ENCODE measurements at regions of chr1 and their contacts with region 1.

Region 1: DNA sequence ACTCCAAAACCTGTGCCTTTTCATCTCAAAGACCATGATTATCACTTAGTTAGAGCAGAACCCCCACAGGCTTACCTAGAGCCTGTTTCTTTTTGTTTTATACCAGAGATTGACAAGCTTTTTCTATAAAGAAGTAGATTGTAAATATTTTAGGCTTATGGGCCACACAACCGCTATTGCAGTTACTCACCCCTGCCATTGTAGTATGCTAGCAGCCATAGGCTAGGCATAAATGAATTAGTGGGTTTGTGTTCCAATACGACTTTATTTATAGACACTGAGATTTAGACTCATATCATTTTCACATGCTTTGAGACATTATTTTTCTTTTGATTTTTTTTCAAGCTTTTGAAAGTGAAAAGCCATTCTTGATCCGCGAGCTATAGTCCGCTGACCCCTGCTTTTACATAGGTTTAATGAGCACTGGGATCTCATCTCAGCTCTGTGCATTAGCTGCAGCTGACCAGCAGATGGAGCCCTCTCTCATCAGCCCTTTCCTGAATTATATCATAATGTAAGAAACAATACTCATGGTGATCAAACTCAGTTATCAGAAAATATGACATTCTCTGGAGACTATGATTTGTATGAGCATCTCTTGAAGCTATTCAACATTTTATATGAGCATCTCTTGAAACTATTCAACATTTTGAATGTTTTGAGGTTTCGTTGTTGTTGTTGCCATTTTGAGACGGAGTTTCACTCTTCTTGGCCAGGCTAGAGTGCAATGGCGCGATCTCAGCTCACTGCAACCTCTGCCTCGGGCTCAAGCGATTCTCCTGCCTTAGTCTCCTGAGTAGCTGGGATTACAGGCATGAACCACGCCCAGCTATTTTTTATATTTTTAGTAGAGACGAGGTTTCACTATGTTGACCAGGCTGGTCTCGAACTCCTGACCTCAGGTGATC is 111.9 kb upstream of the L1TD1 start:
- DNase-seq: peak; percentile 75
- H3K4me3 Mint-ChIP-seq: no peak overlapping the region
- H3K27ac Mint-ChIP-seq: no peak overlapping the region
- H3K4me1 Mint-ChIP-seq: no peaks in the 10 kb centered on the region
- H3K27me3 Mint-ChIP-seq: no peaks in the 10 kb centered on the region

Region 2: GRCh38 chr1:62131093-62131725 is 48.5 kb after region 1 on chr1:
- intact Hi-C with region 1: loop called (anchors 1 kb)
- DNase-seq: peak; percentile 79
- H3K4me3 Mint-ChIP-seq: no peak overlapping the region
- H3K27ac Mint-ChIP-seq: no peak overlapping the region
- H3K4me1 Mint-ChIP-seq: no peaks in the 10 kb centered on the region
- H3K27me3 Mint-ChIP-seq: no peaks in the 10 kb centered on the region

Region 3: DNA sequence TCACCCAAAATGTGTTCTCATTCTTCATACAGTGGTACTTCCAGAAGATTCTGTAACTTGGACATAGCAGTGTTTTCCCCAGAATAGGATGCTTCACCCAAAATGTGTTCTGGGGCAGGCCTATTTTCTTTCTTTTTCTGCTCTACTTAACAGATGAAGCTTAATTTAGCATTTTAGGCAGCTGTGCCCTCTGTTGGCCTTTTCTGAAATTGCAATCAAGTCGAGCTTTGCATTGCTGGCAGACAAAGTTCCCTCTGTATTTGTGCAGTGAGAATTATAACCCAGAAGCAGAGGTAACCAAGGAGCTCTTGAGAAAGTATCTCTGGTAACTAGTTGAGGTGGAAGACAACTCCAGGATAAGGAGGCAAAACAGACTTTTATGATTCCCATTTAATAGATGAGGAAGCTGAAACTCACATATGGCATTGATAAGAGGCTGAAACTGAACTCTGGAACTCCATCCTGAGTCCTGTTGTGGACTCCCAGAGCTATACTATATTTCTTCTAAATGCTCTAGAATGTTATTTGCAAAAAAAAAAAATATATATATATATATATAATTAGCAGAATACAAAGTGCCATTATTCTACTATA is 61.6 kb after region 1 on chr1:
- intact Hi-C with region 1: loop called (anchors 1 kb)
- DNase-seq: peak; percentile 80
- H3K4me3 Mint-ChIP-seq: no peak overlapping the region
- H3K27ac Mint-ChIP-seq: no peak overlapping the region
- H3K4me1 Mint-ChIP-seq: no peaks in the 10 kb centered on the region
- H3K27me3 Mint-ChIP-seq: no peaks in the 10 kb centered on the region

Region 4: DNA sequence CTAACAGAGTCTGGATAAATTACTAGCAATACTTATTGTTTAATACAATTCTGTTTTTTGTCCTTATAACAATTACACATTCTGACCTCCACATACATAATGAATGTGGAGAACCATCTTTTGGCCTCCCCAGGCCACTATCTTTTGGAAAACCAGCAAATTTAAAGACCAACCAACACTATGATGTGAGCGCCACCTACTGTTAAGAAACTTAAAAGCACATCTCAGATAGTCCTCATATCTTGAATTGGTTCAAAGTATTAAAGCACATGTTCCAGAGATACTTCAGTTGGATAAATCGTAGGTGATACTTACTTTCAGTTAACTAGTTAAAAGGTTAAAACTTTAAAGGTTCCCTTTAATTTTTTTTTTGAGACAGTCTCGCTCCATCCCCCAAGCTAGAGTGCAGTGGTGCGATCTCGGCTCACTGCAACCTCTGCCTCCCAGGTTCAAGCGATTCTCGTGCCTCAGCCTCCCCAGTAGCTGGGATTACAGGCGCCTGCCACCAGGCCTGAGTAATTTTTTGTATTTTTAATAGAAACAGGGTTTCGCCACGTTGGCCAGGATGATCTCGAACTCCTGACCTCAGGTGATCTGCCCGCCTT is 324.8 kb after region 1 on chr1:
- intact Hi-C with region 1: loop called (anchors 1 kb)
- DNase-seq: peak; percentile 73
- H3K4me3 Mint-ChIP-seq: no peak overlapping the region
- H3K27ac Mint-ChIP-seq: no peak overlapping the region
- H3K4me1 Mint-ChIP-seq: no peaks in the 10 kb centered on the region
- H3K27me3 Mint-ChIP-seq: peaks cover 7% of the 10 kb centered on the region

Measured in activated CD4-positive, alpha-beta T cell treated with anti-CD3 and anti-CD28 coated beads, Interleukin-2, amount 10 ng/mL, durations not matched to agents 24 days and 14 days (primary cell).